PC-3 (cell line): ENCODE measurements at regions of chr14 and their contacts with region 1.

Region 1: GRCh38 chr14:41521909-41522308 is 84.8 kb upstream of the LRFN5 start:
- DNase-seq: peak; percentile 78
- ATAC-seq: peak; percentile 92
- H3K4me3 ChIP-seq: no peak overlapping the region
- H3K27ac ChIP-seq: peak overlapping the region; percentile 66
- H3K4me1 ChIP-seq: peaks cover 14% of the 10 kb centered on the region
- H3K27me3 ChIP-seq: no peaks in the 10 kb centered on the region
- CTCF ChIP-seq: no peak

Region 2: GRCh38 chr14:41457335-41457734 is 64.6 kb before region 1 on chr14:
- CTCF ChIA-PET with region 1: no interaction called
- POLR2A ChIA-PET with region 1: no interaction called
- intact Hi-C with region 1: loop called (anchors 5 kb)
- DNase-seq: peak; percentile 44
- ATAC-seq: peak; percentile 93
- H3K4me3 ChIP-seq: no peak overlapping the region
- H3K27ac ChIP-seq: 0 out of 2 replicates have a peak overlapping the region, but pooled peaks have one; percentile 2
- H3K4me1 ChIP-seq: peaks cover 12% of the 10 kb centered on the region; the same call in 1 of the 2 replicates
- H3K27me3 ChIP-seq: no peaks in the 10 kb centered on the region
- CTCF ChIP-seq: no peak

Region 3: DNA sequence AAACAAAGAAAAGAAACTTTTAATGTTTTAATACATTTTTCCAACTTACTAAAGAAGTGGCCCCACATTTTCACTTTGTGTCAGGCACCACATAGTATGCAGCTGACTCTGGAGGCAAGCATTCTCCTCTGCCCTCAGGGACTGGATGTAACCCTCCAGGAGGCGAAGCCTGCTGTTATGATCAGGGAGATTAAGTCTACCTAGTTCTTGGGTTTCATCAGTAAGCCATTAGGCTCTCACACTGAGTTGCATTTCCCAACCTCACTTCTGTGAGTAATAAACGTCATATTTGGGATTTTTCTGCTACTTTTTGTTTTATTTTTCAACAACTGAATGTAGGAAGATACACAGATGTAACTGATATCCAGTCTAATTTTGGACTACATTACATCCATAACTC is 16.4 kb before region 1 on chr14:
- CTCF ChIA-PET with region 1: no interaction called
- POLR2A ChIA-PET with region 1: no interaction called
- intact Hi-C with region 1: no loop called
- DNase-seq: no peak
- ATAC-seq: no peak
- H3K4me3 ChIP-seq: no peak overlapping the region
- H3K27ac ChIP-seq: no peak overlapping the region
- H3K4me1 ChIP-seq: no peaks in the 10 kb centered on the region
- H3K27me3 ChIP-seq: no peaks in the 10 kb centered on the region
- CTCF ChIP-seq: no peak